Heart right ventricle (tissue), 16 donors: ENCODE measurements at regions of chr11 and their contacts with region 1.

Region 1: DNA sequence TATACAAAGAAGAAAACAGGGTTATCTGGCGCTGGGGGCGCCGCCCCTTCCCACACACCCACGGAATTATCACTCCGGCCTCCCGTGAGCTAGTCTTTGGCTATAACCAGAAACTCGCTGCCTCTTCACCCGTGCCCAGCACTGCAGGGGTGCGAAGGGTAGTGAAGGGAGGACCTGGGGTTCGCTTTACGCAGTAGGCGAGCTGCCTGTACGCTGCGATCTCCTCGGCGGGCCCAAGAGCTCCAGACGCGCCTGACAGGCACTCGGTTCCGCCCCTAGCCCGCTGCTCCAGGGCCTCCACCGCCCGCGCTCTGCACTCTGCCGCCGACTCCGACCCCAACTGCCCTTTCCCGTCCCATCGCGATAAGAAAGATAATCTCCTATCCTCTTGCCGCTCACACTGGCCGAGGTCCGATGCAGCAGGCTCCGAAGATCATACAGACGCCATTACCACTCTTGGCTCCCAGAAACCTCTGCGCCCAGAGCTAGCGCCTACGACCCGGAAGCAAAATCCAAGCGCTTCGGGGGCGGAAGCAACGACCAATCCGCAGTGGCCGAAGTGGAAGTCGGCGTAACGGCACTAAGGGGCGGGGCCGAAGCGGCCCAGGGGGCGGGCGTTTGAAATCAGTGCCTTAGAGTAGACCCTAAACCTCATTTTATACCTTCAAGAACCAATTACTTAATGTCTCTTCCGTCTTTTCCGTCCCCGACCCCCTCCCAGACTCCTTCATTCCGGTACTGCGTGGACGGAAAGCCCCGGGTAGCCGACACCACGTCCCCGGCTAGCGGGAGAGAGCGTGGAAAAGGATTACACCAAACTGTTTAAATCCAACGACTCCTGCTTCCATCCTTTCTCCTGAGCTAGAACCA is at the starts of genes CWC15 and KDM4D:
- DNase-seq: peak; percentile 94 to 96
- ATAC-seq: peak; percentile 100
- H3K4me3 ChIP-seq: peak within 1 kb of the TSS; percentile 67 to 97 (median 84)
- H3K27ac ChIP-seq: peak within 1 kb of the TSS in 9 of 10 donors; percentile 56 to 88 (median 81)
- H3K4me1 ChIP-seq: peaks cover 2 to 26% (median 15%) of the 10 kb centered on the region in 9 donors
- H3K27me3 ChIP-seq: no peaks in the 10 kb centered on the region
- CTCF ChIP-seq: no peak
- total RNA-seq, gene CWC15: 53.1 to 75.4 (median 67.3) TPM
- total RNA-seq, gene KDM4D: 0.79 to 1.3 (median 1.0) TPM

Region 2: GRCh38 chr11:95067039-95067840 is 93.9 kb after region 1 on chr11:
- intact Hi-C with region 1: loop called in 3 of 10 experiments (anchors 5 kb)
- DNase-seq: peak; percentile 83 to 88
- ATAC-seq: peak; percentile 87 to 95 (median 90)
- H3K4me3 ChIP-seq: peak overlapping the region; percentile 72 to 89 (median 82)
- H3K27ac ChIP-seq: peak overlapping the region; percentile 94 to 99 (median 97)
- H3K4me1 ChIP-seq: peaks cover 0 to 27% (median 20%) of the 10 kb centered on the region in 9 donors
- H3K27me3 ChIP-seq: no peaks in the 10 kb centered on the region
- CTCF ChIP-seq: peak; percentile 50 to 77 (median 61)

Region 3: DNA sequence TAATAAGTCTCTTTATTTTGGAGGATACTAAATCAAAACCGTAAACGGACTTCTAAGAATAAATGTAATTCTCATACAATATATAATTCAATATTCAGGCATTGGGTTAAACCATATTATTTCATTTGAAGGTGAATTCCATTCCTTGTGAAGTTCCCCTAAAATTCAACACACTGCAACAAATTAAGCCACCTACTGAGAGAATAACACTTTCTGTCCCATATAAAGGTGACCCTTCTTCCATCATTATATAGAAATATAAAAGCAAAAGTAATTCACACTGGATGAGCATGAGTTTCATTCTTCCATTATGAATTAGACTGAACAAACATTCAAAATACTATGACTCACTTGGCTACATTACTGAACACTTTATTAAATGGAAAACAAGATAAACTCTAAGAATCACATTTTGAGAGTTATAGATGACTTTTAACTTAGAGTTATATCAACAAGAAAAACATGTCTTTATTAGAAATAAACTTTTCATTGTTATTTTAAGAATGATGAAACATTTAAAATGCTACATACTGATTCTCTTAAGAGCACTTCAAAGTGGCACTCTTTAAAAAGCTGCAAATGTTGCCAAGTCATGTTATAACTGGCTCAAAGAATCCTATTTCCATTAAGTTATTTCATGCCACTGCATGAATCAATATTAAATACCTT is 254.9 kb after region 1 on chr11:
- intact Hi-C with region 1: no loop called
- DNase-seq: no peak
- ATAC-seq: no peak
- H3K4me3 ChIP-seq: peak overlapping the region in 5 of 10 donors; percentile 83 to 94 (median 86)
- H3K27ac ChIP-seq: no peak overlapping the region
- H3K4me1 ChIP-seq: peaks cover 0 to 37% (median 21%) of the 10 kb centered on the region in 9 donors
- H3K27me3 ChIP-seq: no peaks in the 10 kb centered on the region
- CTCF ChIP-seq: no peak

Region 4: DNA sequence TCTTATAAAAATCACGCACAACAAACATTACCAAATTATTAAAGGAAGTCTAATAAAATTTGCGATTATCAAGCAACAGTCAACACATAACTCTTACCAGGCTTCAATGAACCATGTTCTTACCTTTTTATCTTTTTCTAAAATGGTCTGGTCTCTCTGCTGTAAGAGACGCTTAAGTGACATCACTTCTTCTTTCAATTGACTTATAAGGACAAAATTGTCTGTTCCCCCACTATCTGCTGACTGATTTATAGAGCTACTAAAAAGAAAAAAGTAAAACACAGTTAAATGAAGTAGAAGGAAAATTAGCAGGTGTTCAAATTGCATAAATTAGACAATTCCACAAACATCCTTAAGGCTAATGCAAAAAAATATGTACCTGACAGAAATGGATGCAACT is 805.4 kb after region 1 on chr11:
- intact Hi-C with region 1: loop called in 2 of 10 experiments (anchors 10 kb)
- DNase-seq: no peak
- ATAC-seq: no peak
- H3K4me3 ChIP-seq: no peak overlapping the region
- H3K27ac ChIP-seq: no peak overlapping the region
- H3K4me1 ChIP-seq: no peaks in the 10 kb centered on the region
- H3K27me3 ChIP-seq: no peaks in the 10 kb centered on the region
- CTCF ChIP-seq: no peak

Region 5: GRCh38 chr11:95790123-95790932 is 817.0 kb after region 1 on chr11 and contains the start of gene CEP57:
- intact Hi-C with region 1: loop called in 1 of 10 experiments (anchors 10 kb)
- DNase-seq: peak; percentile 88 to 99
- ATAC-seq: peak; percentile 88 to 97 (median 94)
- H3K4me3 ChIP-seq: peak within 1 kb of the TSS; percentile 77 to 98 (median 90)
- H3K27ac ChIP-seq: peak within 1 kb of the TSS; percentile 93 to 100 (median 98)
- H3K4me1 ChIP-seq: peaks cover 0 to 31% (median 26%) of the 10 kb centered on the region in 9 donors
- H3K27me3 ChIP-seq: no peaks in the 10 kb centered on the region
- CTCF ChIP-seq: no peak
- total RNA-seq, gene CEP57: 17.3 to 28.5 (median 25.1) TPM